ENCODE measurements at regions of chr2 and their contacts with region 1.

Region 1: GRCh38 chr2:113157118-113157896 is 16.5 kb upstream of the PSD4 start:
- DNase-seq: peak; percentile 67
- H3K4me3 Mint-ChIP-seq: peak overlapping the region; percentile 82
- H3K27ac Mint-ChIP-seq: peak overlapping the region; percentile 86
- H3K4me1 Mint-ChIP-seq: peaks cover 23% of the 10 kb centered on the region
- H3K27me3 Mint-ChIP-seq: no peaks in the 10 kb centered on the region

Region 2: DNA sequence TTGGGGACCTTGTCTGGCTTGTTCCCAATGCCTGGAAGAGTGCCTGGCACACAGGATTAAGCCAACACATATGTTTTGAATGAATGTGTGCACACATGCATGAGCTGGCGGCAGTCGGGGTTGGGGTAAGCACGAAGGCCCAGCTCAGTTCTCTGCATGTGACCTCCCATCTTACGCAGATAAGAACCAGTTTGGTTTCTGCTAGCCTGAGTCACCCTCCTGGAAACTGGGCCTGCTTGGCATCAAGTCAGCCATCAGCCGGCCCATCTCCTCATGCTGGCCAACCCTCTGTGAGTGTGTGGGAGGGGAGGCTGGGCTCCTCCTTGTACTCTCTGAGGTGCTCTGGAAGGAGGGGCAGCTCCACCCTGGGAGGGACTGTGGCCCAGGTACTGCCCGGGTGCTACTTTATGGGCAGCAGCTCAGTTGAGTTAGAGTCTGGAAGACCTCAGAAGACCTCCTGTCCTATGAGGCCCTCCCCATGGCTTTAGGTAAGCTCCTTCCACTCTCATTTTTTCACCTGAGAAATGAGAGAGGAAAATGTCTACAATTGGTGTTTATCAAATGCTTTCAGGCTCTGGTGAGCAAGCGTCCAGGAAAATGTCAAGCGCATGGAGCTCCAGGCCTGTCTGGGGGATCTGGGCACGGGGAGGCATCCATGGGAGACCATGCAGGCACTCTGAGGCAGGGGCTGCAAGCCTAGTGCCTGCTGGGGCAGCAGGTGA is 39.6 kb before region 1 on chr2:
- CTCF ChIA-PET with region 1: no interaction called
- intact Hi-C with region 1: loop called (anchors 2 kb)
- DNase-seq: peak; percentile 74
- H3K4me3 Mint-ChIP-seq: no peak overlapping the region
- H3K27ac Mint-ChIP-seq: no peak overlapping the region
- H3K4me1 Mint-ChIP-seq: peaks cover 14% of the 10 kb centered on the region
- H3K27me3 Mint-ChIP-seq: no peaks in the 10 kb centered on the region

Region 3: DNA sequence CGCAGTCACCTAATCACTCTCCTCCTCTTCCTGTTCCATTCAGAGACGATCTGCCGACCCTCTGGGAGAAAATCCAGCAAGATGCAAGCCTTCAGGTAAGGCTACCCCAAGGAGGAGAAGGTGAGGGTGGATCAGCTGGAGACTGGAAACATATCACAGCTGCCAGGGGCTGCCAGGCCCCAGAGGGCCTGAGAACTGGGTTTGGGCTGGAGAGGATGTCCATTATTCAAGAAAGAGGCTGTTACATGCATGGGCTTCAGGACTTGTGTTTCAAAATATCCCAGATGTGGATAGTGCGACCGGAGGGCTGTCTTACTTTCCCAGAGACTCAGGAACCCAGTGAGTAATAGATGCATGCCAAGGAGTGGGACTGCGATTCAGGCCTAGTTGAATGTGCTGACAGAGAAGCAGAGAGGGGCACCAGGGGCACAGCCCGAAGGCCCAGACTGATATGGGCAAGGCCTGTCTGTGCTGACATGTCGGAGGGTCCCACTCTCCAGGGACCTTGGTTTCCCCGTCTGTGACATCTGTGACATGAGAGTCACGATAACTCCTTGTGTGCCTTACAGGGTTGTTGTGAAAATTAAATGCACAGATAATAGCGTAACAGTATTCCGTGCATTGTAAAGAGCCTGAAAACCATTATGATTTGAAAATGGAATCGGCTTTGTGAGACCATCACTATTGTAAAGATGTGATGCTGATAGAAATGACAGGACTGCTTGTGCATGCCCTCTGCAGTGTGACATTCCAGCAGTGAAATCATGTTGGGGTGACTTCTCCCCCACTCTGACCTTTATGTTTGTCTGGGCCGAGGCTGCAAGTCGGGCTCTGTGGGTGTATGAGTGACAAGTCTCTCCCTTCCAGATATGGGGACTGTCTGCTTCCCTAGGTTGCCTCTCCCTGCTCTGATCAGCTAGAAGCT is 29.4 kb before region 1 on chr2:
- CTCF ChIA-PET with region 1: no interaction called
- intact Hi-C with region 1: no loop called
- DNase-seq: no peak
- H3K4me3 Mint-ChIP-seq: no peak overlapping the region
- H3K27ac Mint-ChIP-seq: no peak overlapping the region
- H3K4me1 Mint-ChIP-seq: peaks cover 21% of the 10 kb centered on the region
- H3K27me3 Mint-ChIP-seq: no peaks in the 10 kb centered on the region

Region 4: GRCh38 chr2:113167115-113167932 is 10.0 kb after region 1 on chr2:
- CTCF ChIA-PET with region 1: interaction called, 47 read pairs
- intact Hi-C with region 1: loop called (anchors 1 kb)
- DNase-seq: peak; percentile 74
- H3K4me3 Mint-ChIP-seq: peak overlapping the region; percentile 61
- H3K27ac Mint-ChIP-seq: peak overlapping the region; percentile 99
- H3K4me1 Mint-ChIP-seq: peaks cover 71% of the 10 kb centered on the region
- H3K27me3 Mint-ChIP-seq: no peaks in the 10 kb centered on the region